CD8-positive, alpha-beta memory T cell (primary cell): ENCODE measurements at regions of chr11 and their contacts with region 1.

Region 1: GRCh38 chr11:119168471-119169281 is at the start of gene NLRX1:
- DNase-seq: peak; percentile 70 to 87 (median 76)
- H3K4me3 ChIP-seq: peak within 1 kb of the TSS; percentile 66
- H3K4me3 Mint-ChIP-seq: peak within 1 kb of the TSS; percentile 87 to 97 (median 90)
- H3K27ac ChIP-seq: peak within 1 kb of the TSS; percentile 67
- H3K27ac Mint-ChIP-seq: peak within 1 kb of the TSS; percentile 79 to 97 (median 88)
- H3K4me1 ChIP-seq: peaks cover 7% of the 10 kb centered on the region
- H3K4me1 Mint-ChIP-seq: peaks cover 5 to 14% (median 6%) of the 10 kb centered on the region in 3 donors
- H3K27me3 ChIP-seq: no peaks in the 10 kb centered on the region
- H3K27me3 Mint-ChIP-seq: no peaks in the 10 kb centered on the region
- total RNA-seq, gene NLRX1: 16.1 to 16.7 TPM

Region 2: GRCh38 chr11:119044708-119045107 is 124.0 kb before region 1 on chr11:
- CTCF ChIA-PET with region 1: no interaction called
- POLR2A ChIA-PET with region 1: no interaction called
- DNase-seq: no peak
- H3K4me3 ChIP-seq: no peak overlapping the region
- H3K4me3 Mint-ChIP-seq: no peak overlapping the region
- H3K27ac ChIP-seq: no peak overlapping the region
- H3K27ac Mint-ChIP-seq: peak overlapping the region in 1 of 8 donors; percentile 19
- H3K4me1 ChIP-seq: no peaks in the 10 kb centered on the region
- H3K4me1 Mint-ChIP-seq: no peaks in the 10 kb centered on the region
- H3K27me3 ChIP-seq: no peaks in the 10 kb centered on the region
- H3K27me3 Mint-ChIP-seq: no peaks in the 10 kb centered on the region

Region 3: DNA sequence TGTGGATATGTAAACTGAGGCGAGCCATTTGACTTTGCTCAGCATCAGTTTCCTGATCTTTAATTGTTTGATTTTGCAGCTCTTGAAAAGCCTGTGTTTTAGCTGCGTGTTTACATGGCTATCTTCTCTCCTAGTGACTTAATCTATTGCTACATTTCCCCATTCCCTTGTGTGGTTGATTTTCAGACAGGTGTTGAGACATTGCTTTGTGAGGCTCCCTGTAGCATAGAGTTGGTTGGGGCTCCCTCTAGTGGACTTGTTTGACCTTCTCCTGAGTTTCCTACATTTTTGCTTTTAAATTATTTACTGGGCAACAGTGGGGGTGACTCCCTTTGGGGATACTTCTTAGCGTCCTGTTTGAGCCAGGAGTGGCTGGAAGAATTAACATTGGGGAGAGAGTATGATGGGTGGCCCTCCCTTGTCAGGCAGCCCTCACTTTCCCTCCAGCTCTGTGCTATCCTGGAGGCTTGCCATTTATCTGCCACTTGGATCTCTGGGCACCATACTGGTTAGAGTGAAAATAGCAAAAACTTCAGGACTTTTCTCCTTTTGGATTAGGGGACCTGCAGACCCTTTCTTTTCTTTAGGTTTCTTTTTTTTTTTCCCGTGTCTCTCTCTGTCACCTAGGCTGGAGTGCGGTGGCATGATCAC is 28.3 kb after region 1 on chr11:
- CTCF ChIA-PET with region 1: interaction called, 13 read pairs
- POLR2A ChIA-PET with region 1: no interaction called
- DNase-seq: peak; percentile 39 to 76 (median 70)
- H3K4me3 ChIP-seq: no peak overlapping the region
- H3K4me3 Mint-ChIP-seq: peak overlapping the region in 1 of 7 donors; percentile 28
- H3K27ac ChIP-seq: no peak overlapping the region
- H3K27ac Mint-ChIP-seq: peak overlapping the region in 3 of 8 donors; percentile 1 to 76 (median 2)
- H3K4me1 ChIP-seq: no peaks in the 10 kb centered on the region
- H3K4me1 Mint-ChIP-seq: peaks cover 0 to 6% (median 4%) of the 10 kb centered on the region in 3 donors
- H3K27me3 ChIP-seq: no peaks in the 10 kb centered on the region
- H3K27me3 Mint-ChIP-seq: peaks cover 0 to 2% of the 10 kb centered on the region in 2 donors